Panc1 (cell line): ENCODE measurements at regions of chr14 and their contacts with region 1.

Region 1: DNA sequence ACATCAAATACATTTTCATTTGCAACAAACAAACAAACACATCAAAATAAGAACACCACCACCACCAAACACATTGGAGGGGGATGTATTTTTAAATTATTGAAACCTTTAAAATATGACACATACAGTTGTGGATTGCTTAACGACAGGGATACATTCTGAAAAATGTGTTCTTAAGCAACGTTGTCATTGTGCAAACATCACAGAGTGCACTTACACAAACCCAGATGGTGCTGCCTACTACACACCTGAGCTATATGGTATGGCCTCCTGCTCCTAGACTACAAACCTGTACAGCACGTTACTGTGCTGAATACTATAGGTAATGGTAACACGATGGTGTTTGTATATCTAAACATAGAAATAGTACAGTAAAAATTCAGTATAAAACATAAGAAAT is 19.4 kb downstream of the PYGL start:
- DNase-seq: no peak
- ATAC-seq: no peak
- H3K4me3 ChIP-seq: no peak overlapping the region
- H3K27ac ChIP-seq: no peak overlapping the region
- H3K4me1 ChIP-seq: no peaks in the 10 kb centered on the region
- H3K27me3 ChIP-seq: no peaks in the 10 kb centered on the region
- CTCF ChIP-seq: no peak

Region 2: GRCh38 chr14:50906326-50907065 is 18.4 kb before region 1 on chr14:
- CTCF ChIA-PET with region 1: no interaction called
- POLR2A ChIA-PET with region 1: no interaction called
- in situ Hi-C with region 1: no loop called
- intact Hi-C with region 1: no loop called
- DNase-seq: no peak
- ATAC-seq: no peak
- H3K4me3 ChIP-seq: no peak overlapping the region
- H3K27ac ChIP-seq: no peak overlapping the region
- H3K4me1 ChIP-seq: no peaks in the 10 kb centered on the region
- H3K27me3 ChIP-seq: no peaks in the 10 kb centered on the region
- CTCF ChIP-seq: no peak

Region 3: GRCh38 chr14:52835122-52835903 is 1910.5 kb after region 1 on chr14:
- CTCF ChIA-PET with region 1: no interaction called
- POLR2A ChIA-PET with region 1: interaction called, 10 read pairs
- in situ Hi-C with region 1: no loop called
- intact Hi-C with region 1: no loop called
- DNase-seq: no peak
- ATAC-seq: no peak
- H3K4me3 ChIP-seq: no peak overlapping the region
- H3K27ac ChIP-seq: no peak overlapping the region
- H3K4me1 ChIP-seq: no peaks in the 10 kb centered on the region
- H3K27me3 ChIP-seq: no peaks in the 10 kb centered on the region
- CTCF ChIP-seq: no peak